Transverse colon (tissue), 4 donors: ENCODE measurements at regions of chr6 and their contacts with region 1.

Region 1: GRCh38 chr6:30742316-30743098 is at the start of gene FLOT1:
- DNase-seq: peak; percentile 99
- H3K4me3 ChIP-seq: peak within 1 kb of the TSS; percentile 75 to 87 (median 78)
- H3K27ac ChIP-seq: peak within 1 kb of the TSS; percentile 96 to 98 (median 98)
- H3K4me1 ChIP-seq: peaks cover 26 to 64% (median 37%) of the 10 kb centered on the region in 4 donors
- H3K27me3 ChIP-seq: no peaks in the 10 kb centered on the region
- CTCF ChIP-seq: no peak
- EP300 ChIP-seq: peak; percentile 1
- POLR2A ChIP-seq: peak; percentile 88
- total RNA-seq, gene FLOT1: 123 to 146 (median 139) TPM

Region 2: GRCh38 chr6:30877419-30878371 is 135.2 kb after region 1 on chr6:
- in situ Hi-C with region 1: loop called in 2 of 4 experiments (anchors 25 kb)
- intact Hi-C with region 1: loop called (anchors 5 kb)
- DNase-seq: peak; percentile 93
- H3K4me3 ChIP-seq: peak overlapping the region in 3 of 4 donors; percentile 17 to 53 (median 30)
- H3K27ac ChIP-seq: peak overlapping the region; percentile 85 to 87 (median 87)
- H3K4me1 ChIP-seq: peaks cover 11 to 38% (median 19%) of the 10 kb centered on the region in 4 donors
- H3K27me3 ChIP-seq: no peaks in the 10 kb centered on the region
- CTCF ChIP-seq: peak; percentile 86 to 98 (median 89)
- EP300 ChIP-seq: no peak
- POLR2A ChIP-seq: no peak